Activated B cell treated with CpG ODN at 0.5 μM for 24 hours (primary cell): ENCODE measurements at regions of chr12 and their contacts with region 1.

Region 1: DNA sequence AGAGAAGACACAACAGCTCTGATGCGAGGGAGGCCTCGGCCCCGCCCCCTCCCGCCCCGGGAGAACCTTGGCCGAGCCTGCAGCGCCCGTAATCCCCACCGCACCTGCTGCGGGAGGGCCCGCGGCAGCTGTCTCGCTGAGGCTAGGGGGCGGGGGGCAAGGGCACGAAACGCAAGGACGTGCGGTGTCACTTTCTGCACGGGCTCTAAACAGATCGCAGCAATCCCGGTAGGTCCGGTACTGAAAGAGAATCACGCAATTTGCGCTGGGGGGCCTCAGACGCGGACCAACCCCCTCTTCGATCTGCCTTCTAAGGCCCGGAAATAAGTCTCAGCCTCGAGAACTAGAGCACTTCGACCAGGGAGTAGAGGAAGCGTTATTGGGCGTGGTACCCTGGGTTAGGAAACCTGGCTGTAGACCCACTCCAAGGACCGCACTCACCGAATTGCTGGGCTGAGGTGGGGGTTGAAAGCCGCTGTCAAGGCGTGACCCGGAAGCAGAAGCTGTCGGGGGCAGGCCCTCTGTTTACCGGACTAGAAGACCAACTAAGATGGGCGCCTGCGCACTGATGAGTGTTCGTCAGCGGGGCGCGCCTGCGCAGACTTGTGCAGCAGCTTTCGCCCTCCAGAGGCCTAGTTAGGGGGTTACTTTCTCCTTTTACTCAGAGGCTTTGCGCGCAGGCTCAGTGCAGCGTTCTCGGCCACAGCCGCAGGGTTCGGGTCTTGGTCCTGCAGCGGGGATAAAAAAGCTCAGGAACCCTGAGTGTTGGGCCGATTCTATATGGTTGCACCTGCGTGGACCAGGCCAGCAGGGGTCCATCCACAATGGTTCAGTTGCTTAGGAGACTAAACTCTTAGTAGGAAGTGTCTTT is at the start of gene ASB8:
- DNase-seq: peak; percentile 96
- ATAC-seq: peak; percentile 93
- H3K4me3 Mint-ChIP-seq: peak within 1 kb of the TSS; percentile 96
- H3K27ac Mint-ChIP-seq: peak within 1 kb of the TSS; percentile 97
- H3K4me1 Mint-ChIP-seq: peaks cover 26% of the 10 kb centered on the region
- H3K27me3 Mint-ChIP-seq: peaks cover 2% of the 10 kb centered on the region
- CTCF ChIP-seq: no peak
- total RNA-seq, gene ASB8: 40.0 and 43.6 TPM in 2 replicates

Region 2: GRCh38 chr12:48017496-48017895 is 139.8 kb before region 1 on chr12:
- CTCF ChIA-PET with region 1: no interaction called
- POLR2A ChIA-PET with region 1: no interaction called
- intact Hi-C with region 1: no loop called
- DNase-seq: no peak
- ATAC-seq: no peak
- H3K4me3 Mint-ChIP-seq: no peak overlapping the region
- H3K27ac Mint-ChIP-seq: no peak overlapping the region
- H3K4me1 Mint-ChIP-seq: no peaks in the 10 kb centered on the region
- H3K27me3 Mint-ChIP-seq: peaks cover 29% of the 10 kb centered on the region
- CTCF ChIP-seq: no peak

Region 3: DNA sequence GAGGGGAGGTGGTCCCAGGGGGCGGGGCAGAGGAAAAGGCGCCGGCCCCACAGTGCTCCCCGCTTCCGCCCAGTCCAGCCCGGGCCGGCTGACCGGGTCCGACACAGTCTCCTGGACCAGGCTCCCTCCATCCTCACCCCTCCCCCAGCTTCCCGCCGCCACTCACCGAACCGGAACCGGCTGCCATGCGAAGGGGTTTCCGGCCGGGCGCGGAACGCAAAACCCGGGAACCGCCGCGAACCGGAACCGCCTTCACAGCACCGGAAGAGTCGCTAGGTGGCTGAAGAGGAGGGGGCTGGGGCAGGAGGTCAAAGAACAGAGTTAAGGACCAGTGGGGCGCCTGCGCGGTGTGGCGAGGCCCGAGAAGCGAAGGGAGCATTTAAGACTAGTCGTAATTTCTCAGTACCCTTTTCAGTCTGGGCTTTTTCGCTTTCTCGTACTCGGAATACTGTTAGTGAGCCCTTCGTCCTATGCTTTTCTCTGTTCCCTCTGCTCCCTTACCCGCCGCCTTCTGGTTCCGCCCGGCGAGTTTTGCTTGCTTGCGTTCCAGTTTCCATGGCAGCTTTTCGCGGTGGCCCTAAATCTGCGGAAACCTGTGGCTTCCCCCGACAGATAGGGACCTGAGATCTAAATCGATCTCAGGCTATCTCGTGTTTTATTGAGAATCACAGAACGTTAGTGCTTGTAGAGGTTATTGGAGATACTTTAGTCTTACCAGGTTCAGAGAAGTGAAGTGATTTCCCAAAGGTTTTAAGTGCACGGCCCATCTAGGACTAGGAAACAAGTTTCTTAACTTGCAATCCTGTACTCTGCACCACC is 51.2 kb before region 1 on chr12 and contains the start of gene SENP1:
- CTCF ChIA-PET with region 1: interaction called, 3 read pairs
- POLR2A ChIA-PET with region 1: interaction called, 61 read pairs
- intact Hi-C with region 1: loop called (anchors 1 kb)
- DNase-seq: peak; percentile 87
- ATAC-seq: peak; percentile 78
- H3K4me3 Mint-ChIP-seq: peak within 1 kb of the TSS; percentile 95
- H3K27ac Mint-ChIP-seq: peak within 1 kb of the TSS; percentile 98
- H3K4me1 Mint-ChIP-seq: peaks cover 49% of the 10 kb centered on the region
- H3K27me3 Mint-ChIP-seq: no peaks in the 10 kb centered on the region
- CTCF ChIP-seq: no peak
- total RNA-seq, gene SENP1: 42.8 and 43.2 TPM in 2 replicates

Region 4: DNA sequence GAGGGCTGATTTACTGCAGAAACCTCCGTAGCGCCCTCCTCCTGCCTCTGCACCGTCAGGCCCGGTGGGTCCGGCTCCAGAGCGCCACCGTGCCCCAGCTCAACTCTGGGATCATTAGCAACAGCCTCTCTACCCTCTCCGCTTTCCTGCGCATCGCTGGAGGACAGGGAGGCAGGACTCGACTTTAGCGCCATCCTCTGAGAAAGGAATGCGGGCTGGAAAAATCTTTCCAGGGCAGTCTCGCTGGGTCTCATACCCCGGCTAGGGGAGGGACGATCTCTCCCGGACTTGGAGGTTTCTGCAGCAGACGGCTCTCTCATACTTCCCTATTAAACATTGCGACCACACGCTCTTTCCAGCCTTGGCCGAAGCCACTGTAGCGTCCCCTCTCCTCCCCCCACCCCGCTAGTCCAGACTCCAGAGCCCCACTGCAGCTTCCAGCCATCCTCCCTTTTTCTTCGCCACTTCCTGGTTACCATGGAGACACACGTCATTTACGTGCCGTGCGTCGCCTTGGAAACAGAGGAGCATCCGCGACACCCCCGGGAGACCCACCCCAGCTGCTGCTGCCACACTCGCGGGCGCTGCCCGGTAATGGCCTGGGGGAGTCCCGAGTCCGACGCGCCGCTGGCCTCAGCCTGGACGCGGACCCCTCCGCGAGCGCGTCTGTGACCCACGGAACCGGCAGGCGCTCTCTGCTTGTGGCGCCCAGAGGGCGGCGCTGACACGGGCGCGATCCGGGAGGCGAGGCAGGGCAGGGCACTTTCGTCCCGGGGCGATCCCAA is 26.0 kb after region 1 on chr12 and contains the start of gene CCDC184:
- CTCF ChIA-PET with region 1: interaction called, 4 read pairs
- POLR2A ChIA-PET with region 1: interaction called, 12 read pairs
- intact Hi-C with region 1: loop called (anchors 1 kb)
- DNase-seq: peak; percentile 69
- ATAC-seq: peak; percentile 76
- H3K4me3 Mint-ChIP-seq: peak within 1 kb of the TSS; percentile 92
- H3K27ac Mint-ChIP-seq: peak within 1 kb of the TSS; percentile 60
- H3K4me1 Mint-ChIP-seq: peaks cover 32% of the 10 kb centered on the region
- H3K27me3 Mint-ChIP-seq: peaks cover 27% of the 10 kb centered on the region
- CTCF ChIP-seq: no peak
- total RNA-seq, gene CCDC184: 0.18 and 0.29 TPM in 2 replicates

Region 5: DNA sequence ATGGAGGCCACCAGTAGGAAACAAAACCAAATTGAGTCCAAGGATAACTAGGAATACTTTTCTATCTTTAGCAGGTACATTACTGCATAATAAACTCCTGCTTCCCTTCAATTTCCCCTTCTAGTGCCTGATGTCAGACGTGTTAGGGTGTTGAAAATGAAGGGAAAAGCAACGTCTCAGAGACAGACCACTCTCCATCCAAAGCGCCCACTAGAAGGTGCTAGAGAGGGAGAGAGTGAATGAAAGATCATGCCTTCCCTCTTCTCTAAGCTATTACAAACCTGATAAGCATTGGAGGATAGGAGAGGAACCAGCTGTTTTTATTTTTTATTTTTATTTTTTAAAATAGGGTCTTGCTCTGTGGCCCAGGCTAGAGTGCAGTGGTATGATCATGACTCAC is 129.4 kb after region 1 on chr12:
- CTCF ChIA-PET with region 1: no interaction called
- POLR2A ChIA-PET with region 1: no interaction called
- intact Hi-C with region 1: no loop called
- DNase-seq: no peak
- ATAC-seq: no peak
- H3K4me3 Mint-ChIP-seq: no peak overlapping the region
- H3K27ac Mint-ChIP-seq: no peak overlapping the region
- H3K4me1 Mint-ChIP-seq: peaks cover 5% of the 10 kb centered on the region
- H3K27me3 Mint-ChIP-seq: peaks cover 22% of the 10 kb centered on the region
- CTCF ChIP-seq: no peak

Region 6: GRCh38 chr12:48350249-48351021 is 193.2 kb after region 1 on chr12 and contains the start of gene ZNF641:
- CTCF ChIA-PET with region 1: no interaction called
- POLR2A ChIA-PET with region 1: no interaction called
- intact Hi-C with region 1: loop called (anchors 1 kb)
- DNase-seq: peak; percentile 73
- ATAC-seq: peak; percentile 87
- H3K4me3 Mint-ChIP-seq: peak within 1 kb of the TSS; percentile 96
- H3K27ac Mint-ChIP-seq: peak within 1 kb of the TSS; percentile 90
- H3K4me1 Mint-ChIP-seq: peaks cover 25% of the 10 kb centered on the region
- H3K27me3 Mint-ChIP-seq: no peaks in the 10 kb centered on the region
- CTCF ChIP-seq: no peak
- total RNA-seq, gene ZNF641: 27.6 and 34.5 TPM in 2 replicates